ENCODE measurements at regions of chr6 and their contacts with region 1.

Region 1: DNA sequence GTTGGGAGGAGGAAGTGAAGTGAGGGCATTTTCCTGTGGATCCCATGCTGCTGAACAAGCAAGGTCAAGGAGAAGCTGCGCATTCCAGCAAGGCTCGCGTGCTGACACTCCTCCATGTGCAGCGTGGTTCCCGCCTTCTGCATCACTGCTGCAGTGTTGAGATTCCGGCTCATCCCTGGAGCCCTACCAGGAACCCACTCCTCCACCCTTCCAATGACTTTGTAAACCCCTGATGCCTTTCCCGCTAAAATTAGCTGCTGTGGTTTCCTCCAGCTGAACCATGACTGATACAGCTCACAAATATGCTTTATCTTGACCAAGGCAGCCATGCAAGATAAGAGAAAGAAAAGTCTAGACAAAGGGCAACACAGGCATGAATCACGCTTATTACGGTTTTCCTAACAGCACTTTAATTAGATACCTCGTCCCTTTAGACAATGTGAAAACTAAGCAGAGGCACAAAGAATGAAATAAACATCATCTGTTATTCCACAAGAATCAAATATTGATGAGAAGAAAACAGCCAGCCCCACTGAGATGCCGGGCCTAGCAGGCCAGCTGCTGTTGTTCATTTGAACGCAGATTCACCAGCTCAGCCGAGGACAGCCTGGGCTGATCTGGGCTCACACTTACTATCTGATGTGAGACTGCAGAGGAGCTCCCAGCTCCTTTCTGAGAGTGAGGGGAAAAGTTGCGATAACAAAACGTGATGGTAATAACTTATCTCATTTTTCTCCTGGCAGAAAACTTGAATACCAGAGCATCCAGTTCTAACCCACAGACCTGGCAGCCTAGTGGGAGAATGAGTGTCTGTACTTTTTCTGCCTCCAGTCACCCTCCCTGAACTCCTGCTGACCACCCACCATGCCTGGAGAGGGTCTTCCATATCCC is 14.2 kb upstream of the BNIP5 start:
- DNase-seq: peak; percentile 92
- ATAC-seq: peak; percentile 92
- H3K4me3 ChIP-seq: no peak overlapping the region
- H3K27ac ChIP-seq: no peak overlapping the region
- H3K4me1 ChIP-seq: peaks cover 11% of the 10 kb centered on the region
- H3K27me3 ChIP-seq: peaks cover 2% of the 10 kb centered on the region; the same call in 1 of the 2 replicates
- CTCF ChIP-seq: no peak
- POLR2A ChIP-seq: no peak
- RAD21 ChIP-seq: no peak

Region 2: DNA sequence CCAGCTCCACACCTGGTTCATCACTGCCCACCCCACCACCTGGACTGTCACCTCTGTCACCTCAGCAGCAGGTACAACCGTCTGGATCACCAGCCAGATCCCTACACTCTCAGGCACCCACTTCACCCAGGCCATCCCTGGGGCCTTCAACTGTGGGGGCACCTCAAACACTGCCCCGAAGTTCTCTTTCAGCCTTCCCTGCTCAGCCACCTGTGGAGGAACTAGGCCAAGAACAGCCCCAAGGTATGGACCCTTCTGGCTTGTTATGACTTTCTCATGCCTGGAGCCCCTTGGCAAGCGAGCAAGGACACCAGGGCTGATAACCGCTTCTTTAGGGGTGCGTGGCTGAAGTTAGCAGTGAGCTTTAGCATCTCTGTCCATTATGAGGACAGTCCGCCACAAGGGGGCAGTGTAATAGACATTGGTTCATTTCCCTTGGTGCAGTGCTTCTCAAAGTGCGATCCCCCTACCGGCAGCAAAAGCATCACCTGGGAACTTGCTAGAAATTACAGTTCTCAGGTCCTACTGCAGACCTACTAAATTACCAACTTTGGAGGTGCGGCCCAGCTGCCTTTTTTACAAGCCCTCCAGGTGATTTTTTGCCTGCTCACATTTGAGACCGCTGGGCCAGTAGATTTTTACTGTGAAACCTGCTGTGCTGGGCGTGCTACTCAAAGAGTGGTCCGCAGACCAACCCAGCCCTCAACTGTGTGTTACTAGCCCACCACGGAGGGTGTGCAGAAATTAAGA is 48.5 kb before region 1 on chr6:
- CTCF ChIA-PET with region 1: no interaction called
- POLR2A ChIA-PET with region 1: interaction called, 11 read pairs
- dilution Hi-C with region 1: no loop called
- in situ Hi-C with region 1: no loop called
- intact Hi-C with region 1: no loop called
- DNase-seq: peak; percentile 86
- ATAC-seq: peak; percentile 85
- H3K4me3 ChIP-seq: no peak overlapping the region
- H3K27ac ChIP-seq: no peak overlapping the region
- H3K4me1 ChIP-seq: peaks cover 4% of the 10 kb centered on the region
- H3K27me3 ChIP-seq: peaks cover 15% of the 10 kb centered on the region
- CTCF ChIP-seq: peak; percentile 98
- POLR2A ChIP-seq: no peak
- RAD21 ChIP-seq: peak; percentile 74

Region 3: DNA sequence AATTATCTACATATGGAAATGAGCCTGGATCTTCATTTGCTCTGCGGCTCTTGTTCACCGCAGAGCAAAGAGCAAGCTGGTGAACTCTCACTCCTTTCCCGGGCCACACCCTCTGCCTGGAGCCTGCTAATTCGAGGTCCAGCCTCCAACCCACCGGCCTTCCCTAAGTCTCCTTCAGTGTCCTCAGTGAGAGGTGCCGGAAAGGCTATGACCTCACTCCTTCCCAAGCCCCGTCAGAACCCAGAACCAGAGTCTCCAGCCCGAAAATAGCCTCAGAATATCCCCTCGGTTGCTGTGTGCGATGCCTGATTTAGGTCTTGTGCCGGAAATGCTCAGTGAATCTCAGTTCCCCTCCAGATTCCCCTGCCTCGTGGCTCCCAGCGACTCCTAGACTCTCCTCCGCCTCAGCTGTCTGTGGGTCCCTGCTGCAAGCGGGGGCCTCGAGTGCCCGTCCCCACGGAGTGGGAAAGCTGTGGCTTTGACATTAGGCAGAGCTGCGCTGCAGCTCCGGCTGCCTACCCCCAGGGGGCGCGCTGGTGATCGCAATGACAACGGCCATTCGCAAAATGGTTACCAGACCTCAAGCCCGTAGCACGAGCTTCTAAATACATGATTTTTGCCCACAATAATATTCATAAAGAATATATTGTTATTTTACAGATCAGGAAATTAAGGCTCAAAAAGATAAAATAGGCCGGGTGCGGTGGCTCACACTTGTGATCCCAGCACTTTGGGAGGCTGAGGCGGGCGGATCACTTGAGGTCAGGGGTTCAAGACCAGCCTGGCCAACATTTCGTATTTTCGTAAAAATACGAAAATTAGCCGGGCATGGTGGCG is 10.1 kb before region 1 on chr6:
- CTCF ChIA-PET with region 1: interaction called, 22 read pairs
- POLR2A ChIA-PET with region 1: no interaction called
- dilution Hi-C with region 1: no loop called
- in situ Hi-C with region 1: no loop called
- intact Hi-C with region 1: no loop called
- DNase-seq: peak; percentile 59
- ATAC-seq: peak; percentile 100
- H3K4me3 ChIP-seq: no peak overlapping the region
- H3K27ac ChIP-seq: no peak overlapping the region
- H3K4me1 ChIP-seq: no peaks in the 10 kb centered on the region
- H3K27me3 ChIP-seq: peaks cover 50% of the 10 kb centered on the region
- CTCF ChIP-seq: peak; percentile 94
- POLR2A ChIP-seq: no peak
- RAD21 ChIP-seq: peak; percentile 75